ENCODE measurements at regions of chr5 and their contacts with region 1.

Region 1: GRCh38 chr5:57650360-57651069 is 167.9 kb upstream of the ACTBL2 start:
- DNase-seq: peak; percentile 61
- H3K4me3 ChIP-seq: no peak overlapping the region
- H3K27ac ChIP-seq: no peak overlapping the region
- H3K4me1 ChIP-seq: peaks cover 5% of the 10 kb centered on the region
- H3K27me3 ChIP-seq: no peaks in the 10 kb centered on the region
- CTCF ChIP-seq: peak; percentile 62 to 83
- POLR2A ChIP-seq: no peak

Region 2: GRCh38 chr5:57662991-57663390 is 12.5 kb after region 1 on chr5:
- CTCF ChIA-PET with region 1: interaction called, 18 read pairs
- POLR2A ChIA-PET with region 1: no interaction called
- dilution Hi-C with region 1: no loop called
- intact Hi-C with region 1: no loop called
- DNase-seq: peak; percentile 33
- H3K4me3 ChIP-seq: no peak overlapping the region
- H3K27ac ChIP-seq: no peak overlapping the region
- H3K4me1 ChIP-seq: peaks cover 13% of the 10 kb centered on the region
- H3K27me3 ChIP-seq: no peaks in the 10 kb centered on the region
- CTCF ChIP-seq: no peak
- POLR2A ChIP-seq: no peak

Region 3: DNA sequence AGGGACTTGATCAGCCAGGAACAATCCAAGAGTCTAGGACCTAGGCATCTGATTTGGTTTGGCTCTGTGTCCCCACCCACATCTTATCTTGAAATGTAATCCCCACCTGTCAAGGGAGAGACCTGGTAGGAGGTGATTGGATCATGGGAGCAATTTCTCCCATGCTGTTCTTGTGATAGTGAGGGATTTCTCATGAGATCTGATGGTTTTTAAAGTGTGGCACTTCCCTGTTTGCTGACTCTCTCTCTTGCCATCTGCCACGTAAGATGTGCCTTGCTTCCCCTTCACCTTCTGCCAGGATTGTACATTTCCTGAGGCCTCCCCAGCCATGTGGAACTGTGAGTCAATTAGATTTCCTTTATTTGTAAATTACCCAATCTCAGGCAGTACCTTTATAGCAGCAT is 33.8 kb after region 1 on chr5:
- CTCF ChIA-PET with region 1: interaction called, 13 read pairs
- POLR2A ChIA-PET with region 1: no interaction called
- dilution Hi-C with region 1: no loop called
- intact Hi-C with region 1: no loop called
- DNase-seq: peak; percentile 44
- H3K4me3 ChIP-seq: no peak overlapping the region
- H3K27ac ChIP-seq: no peak overlapping the region
- H3K4me1 ChIP-seq: peaks cover 5% of the 10 kb centered on the region
- H3K27me3 ChIP-seq: no peaks in the 10 kb centered on the region
- CTCF ChIP-seq: no peak
- POLR2A ChIP-seq: no peak

Region 4: DNA sequence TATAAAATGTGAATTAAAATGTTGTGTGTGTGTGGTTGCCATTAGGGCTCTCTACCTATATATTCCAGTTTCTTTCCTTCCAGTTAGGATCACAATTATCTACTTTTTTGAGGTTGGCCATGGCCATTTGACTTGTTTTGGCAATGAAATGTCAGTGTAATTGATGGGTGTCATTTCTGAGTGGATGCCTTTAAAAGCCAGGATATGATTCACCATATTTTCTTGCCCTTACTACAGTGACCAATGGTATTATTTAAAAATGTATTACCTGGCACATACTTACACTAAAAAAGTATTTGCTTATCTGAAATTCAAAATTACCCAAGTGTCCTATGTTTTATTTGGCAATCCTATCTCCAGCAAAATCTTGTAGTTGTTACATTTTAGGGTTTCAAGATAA is 90.8 kb after region 1 on chr5:
- CTCF ChIA-PET with region 1: interaction called, 19 read pairs
- POLR2A ChIA-PET with region 1: no interaction called
- dilution Hi-C with region 1: no loop called
- intact Hi-C with region 1: no loop called
- DNase-seq: peak; percentile 67
- H3K4me3 ChIP-seq: no peak overlapping the region
- H3K27ac ChIP-seq: peak overlapping the region; percentile 12
- H3K4me1 ChIP-seq: peaks cover 24% of the 10 kb centered on the region
- H3K27me3 ChIP-seq: no peaks in the 10 kb centered on the region
- CTCF ChIP-seq: no peak
- POLR2A ChIP-seq: no peak

Region 5: DNA sequence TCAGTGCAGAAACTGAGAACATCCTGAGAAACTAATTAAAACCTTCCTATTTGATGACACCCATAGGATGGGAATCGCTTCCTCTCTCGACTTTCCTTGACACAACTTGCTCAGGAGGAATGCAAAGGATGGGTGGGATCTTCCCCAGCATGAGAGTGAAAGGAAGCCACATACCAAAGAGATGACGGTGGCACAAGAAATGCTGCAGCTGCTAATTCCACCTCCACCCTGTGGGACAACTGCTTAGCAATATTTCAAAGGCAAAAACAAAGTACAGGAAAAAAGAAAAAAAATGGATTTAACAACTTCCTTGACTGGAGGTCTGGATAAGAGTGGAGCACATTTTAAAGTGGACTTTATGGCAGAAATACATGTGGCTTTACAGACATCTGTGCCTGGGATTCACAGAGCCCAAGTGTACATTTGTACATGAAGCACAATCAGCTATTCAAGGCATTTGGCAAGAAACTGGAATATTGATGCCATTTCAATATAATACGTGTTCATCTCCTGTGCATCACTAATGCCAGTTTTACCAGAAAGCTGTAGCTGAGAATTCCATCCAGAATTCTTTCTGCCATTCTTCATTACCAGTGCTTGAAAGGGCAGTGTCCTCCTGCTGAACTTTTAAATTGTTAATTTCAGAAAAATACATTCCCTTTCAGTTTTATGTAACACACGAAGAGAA is 191.3 kb after region 1 on chr5:
- CTCF ChIA-PET with region 1: interaction called, 5 read pairs
- POLR2A ChIA-PET with region 1: no interaction called
- dilution Hi-C with region 1: no loop called
- intact Hi-C with region 1: loop called (anchors 5 kb)
- DNase-seq: peak; percentile 96
- H3K4me3 ChIP-seq: no peak overlapping the region
- H3K27ac ChIP-seq: peak overlapping the region; percentile 90
- H3K4me1 ChIP-seq: peaks cover 66% of the 10 kb centered on the region
- H3K27me3 ChIP-seq: no peaks in the 10 kb centered on the region
- CTCF ChIP-seq: no peak
- POLR2A ChIP-seq: no peak